ENCODE measurements at regions of chr1 and their contacts with region 1.

Region 1: DNA sequence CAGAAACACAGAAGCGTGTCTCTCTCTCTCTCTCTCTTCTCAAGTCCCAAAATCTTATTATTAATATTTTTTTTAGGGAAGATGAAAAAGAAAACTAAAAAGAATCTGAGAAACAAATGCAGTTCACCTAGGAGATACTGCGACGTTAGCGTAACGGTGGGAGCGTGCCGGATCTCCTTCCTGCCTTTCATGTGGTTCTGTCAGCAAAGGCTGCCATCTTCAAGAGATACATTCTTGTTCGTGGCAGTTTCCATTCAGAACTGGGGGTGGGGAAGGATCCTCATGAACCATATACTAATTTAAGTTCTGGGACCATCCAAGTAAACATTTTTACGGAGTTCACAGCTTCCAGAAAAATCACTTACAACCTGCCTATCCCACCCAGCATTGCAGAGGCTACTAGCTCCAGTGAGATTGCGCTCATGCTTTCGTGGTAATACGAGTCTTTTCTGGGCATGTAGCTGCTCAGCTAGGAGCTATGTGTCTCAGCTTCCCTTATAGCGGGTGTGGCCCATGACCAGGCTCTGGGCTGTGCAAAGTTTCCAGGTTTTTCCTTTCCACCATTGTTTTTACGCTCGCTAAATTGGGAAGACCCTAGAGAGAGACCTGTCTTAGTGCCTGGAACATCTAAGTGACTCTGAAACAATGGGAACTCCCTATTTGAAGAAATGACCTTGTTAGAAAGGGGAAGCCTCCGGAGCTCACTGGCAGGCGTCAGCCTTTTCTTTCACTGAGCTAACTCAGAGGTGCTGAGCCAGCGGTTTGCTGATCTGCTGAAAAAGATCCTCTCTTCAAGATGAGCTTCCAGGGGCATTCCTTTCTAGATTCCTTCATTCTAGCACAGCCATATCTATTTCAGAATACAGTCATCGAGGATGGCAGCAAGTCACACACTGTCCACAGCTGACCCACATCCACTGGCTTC is 17.3 kb downstream of the SLAMF1 start:
- H3K4me3 Mint-ChIP-seq: no peak overlapping the region
- H3K27ac Mint-ChIP-seq: peak overlapping the region; percentile 90
- H3K4me1 Mint-ChIP-seq: peaks cover 87% of the 10 kb centered on the region
- H3K27me3 Mint-ChIP-seq: no peaks in the 10 kb centered on the region

Region 2: GRCh38 chr1:160664573-160665051 is 35.1 kb after region 1 on chr1:
- intact Hi-C with region 1: loop called (anchors 5 kb)
- H3K4me3 Mint-ChIP-seq: no peak overlapping the region
- H3K27ac Mint-ChIP-seq: peak overlapping the region; percentile 78
- H3K4me1 Mint-ChIP-seq: peaks cover 65% of the 10 kb centered on the region
- H3K27me3 Mint-ChIP-seq: no peaks in the 10 kb centered on the region